GM12878 (cell line): ENCODE measurements at regions of chr5 and their contacts with region 1.

Region 1: DNA sequence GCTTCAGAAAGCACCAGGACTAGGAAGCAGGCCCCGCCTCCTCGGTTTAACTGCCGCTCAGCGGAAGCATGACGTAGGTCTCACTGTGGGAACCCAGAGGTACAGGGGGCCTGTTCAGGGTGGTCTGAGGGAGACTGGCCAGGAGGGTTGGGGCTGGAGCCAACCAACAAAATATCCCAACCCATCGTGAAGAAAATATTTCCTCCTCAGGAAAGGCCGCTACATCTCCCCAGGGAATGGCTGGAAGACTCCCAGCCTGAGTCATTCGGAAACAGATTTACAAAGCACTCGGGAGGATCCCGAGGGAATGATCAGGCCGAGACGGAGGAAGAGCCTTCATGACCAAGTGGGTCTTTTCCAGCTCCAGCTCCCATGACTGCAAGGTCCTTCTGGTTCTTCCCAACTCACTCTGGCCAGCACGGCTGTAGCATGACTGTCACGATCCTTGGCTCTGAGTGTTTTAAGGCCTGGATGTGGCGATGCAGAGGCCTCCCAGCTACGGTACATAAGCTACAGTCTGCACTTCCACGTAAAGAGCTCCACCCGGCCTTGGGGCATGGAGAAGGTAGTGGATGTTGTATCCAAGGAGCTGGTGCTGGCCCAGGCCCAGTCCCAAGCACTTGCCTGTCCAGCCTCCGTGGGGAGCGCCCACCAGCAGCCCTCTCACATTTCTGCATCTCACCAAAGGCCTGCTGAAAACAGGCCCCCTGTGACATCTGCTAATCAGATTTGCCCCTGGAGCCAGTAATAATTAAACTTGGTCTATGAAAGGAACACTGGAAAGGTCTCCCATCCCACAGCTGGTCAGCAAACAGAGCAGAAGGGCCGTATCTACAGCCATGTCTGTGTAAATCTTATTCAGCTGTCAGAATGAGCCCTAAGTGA is 100.6 kb downstream of the LHFPL2 start:
- DNase-seq: no peak
- ATAC-seq: no peak
- H3K4me3 ChIP-seq: no peak overlapping the region
- H3K27ac ChIP-seq: peak overlapping the region; percentile 41; the same call in 1 of the 2 replicates
- H3K4me1 ChIP-seq: peaks cover 59% of the 10 kb centered on the region
- H3K27me3 ChIP-seq: no peaks in the 10 kb centered on the region
- CTCF ChIP-seq: no peak
- EP300 ChIP-seq: no peak
- POLR2A ChIP-seq: 0 out of 2 replicates have a peak, but pooled peaks have one; percentile 2
- RAD21 ChIP-seq: no peak

Region 2: DNA sequence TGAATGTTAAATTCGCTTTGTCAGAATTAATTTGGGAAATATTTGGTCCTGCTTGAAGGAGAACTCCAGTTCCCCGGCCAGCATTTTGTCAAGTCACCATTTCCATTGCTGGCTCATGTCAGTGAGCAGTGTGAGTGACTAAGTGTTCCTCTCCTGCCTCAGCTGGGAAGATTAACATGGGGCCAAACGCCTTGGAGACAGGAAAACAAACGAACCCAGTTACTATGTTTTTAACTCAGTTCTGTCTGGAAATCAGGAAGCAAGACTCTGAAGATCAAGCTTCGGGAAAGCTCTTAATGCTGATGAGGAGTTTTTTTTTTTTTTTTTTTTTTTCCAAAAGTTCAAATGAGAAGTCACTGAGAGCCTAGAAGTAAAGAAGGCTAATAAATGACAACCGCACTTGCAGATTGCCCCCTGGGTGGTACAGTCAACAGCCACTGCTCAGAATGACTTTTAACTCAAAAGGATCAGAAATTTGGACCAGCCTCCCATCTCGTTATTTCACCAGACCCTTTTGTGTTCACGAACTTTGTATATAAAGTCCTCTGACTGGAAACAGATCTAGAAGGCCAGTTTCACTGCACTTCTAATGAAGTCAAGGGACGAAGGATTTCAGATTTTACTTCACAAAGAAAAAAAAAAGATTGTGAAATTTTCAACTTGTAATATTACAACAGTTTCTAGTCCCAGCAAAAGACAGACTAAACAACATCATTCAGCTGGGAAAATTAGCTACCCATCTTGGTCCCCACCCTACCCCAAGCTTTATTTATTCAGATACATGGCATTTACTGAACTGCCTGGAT is 20.7 kb before region 1 on chr5:
- CTCF ChIA-PET with region 1: interaction called, 3 read pairs
- POLR2A ChIA-PET with region 1: interaction called, 5 read pairs
- RAD21 ChIA-PET with region 1: interaction called, 3 read pairs
- SMC1A ChIA-PET with region 1: interaction called, 22 read pairs
- in situ Hi-C with region 1: no loop called
- intact Hi-C with region 1: no loop called
- DNase-seq: no peak
- ATAC-seq: no peak
- H3K4me3 ChIP-seq: no peak overlapping the region
- H3K27ac ChIP-seq: no peak overlapping the region
- H3K4me1 ChIP-seq: peaks cover 16% of the 10 kb centered on the region
- H3K27me3 ChIP-seq: no peaks in the 10 kb centered on the region
- CTCF ChIP-seq: no peak
- EP300 ChIP-seq: no peak
- POLR2A ChIP-seq: no peak
- RAD21 ChIP-seq: no peak

Region 3: DNA sequence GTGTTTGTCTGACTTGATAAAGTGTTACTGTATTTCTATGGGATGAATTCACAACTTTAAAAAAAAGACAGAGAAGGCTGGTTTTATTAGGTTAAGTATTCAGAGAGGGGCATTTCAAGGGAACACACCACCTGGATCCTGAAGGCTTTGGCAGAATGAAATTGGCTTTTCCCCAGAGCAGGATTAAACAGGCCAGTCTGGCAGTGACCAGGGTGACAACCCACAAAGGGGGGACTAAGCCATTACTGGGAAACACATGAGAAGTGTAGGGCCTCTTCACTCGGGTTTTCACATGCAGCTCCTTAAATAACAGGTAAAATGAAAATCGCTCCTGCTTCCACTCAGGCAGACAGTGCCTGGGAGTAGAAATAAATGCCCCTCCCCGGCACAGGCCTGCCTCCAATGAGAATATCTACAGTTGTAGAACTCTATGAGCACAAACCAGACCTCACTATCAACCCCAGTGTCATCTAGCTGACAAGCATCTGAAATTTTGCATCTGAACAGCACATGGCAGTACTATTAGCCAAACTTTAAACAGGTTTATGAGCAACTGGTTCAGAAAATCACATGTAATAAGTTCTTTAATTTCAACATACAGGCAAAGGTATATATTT is 14.8 kb after region 1 on chr5:
- CTCF ChIA-PET with region 1: interaction called, 8 read pairs
- POLR2A ChIA-PET with region 1: interaction called, 4 read pairs
- RAD21 ChIA-PET with region 1: interaction called, 9 read pairs
- SMC1A ChIA-PET with region 1: interaction called, 28 read pairs
- in situ Hi-C with region 1: no loop called
- intact Hi-C with region 1: no loop called
- DNase-seq: no peak
- ATAC-seq: no peak
- H3K4me3 ChIP-seq: no peak overlapping the region
- H3K27ac ChIP-seq: no peak overlapping the region
- H3K4me1 ChIP-seq: peaks cover 4% of the 10 kb centered on the region; the same call in 1 of the 2 replicates
- H3K27me3 ChIP-seq: no peaks in the 10 kb centered on the region
- CTCF ChIP-seq: no peak
- EP300 ChIP-seq: no peak
- POLR2A ChIP-seq: no peak
- RAD21 ChIP-seq: no peak

Region 4: DNA sequence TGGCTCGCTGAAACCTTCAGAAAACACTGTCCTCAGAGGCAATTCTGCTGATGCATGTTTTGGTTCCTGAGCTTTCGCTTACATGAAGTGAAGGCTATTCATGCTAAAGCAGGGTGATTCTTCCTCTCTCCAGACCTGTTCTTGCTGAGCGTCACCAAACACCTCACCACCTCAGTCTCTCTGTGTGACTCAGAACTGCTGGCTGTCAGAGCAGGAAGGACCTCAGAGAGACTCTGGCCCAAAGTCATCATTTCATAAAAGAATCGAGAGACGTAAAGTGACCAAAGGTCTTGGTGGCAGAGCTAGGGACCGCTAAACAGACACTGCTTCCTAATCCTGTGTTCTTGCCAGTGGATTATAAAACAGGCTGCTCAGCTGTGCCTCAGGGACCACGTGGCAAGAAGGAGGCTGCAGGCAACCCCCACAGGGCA is 26.8 kb after region 1 on chr5:
- CTCF ChIA-PET with region 1: interaction called, 5 read pairs
- POLR2A ChIA-PET with region 1: interaction called, 3 read pairs
- RAD21 ChIA-PET with region 1: interaction called, 22 read pairs
- SMC1A ChIA-PET with region 1: interaction called, 37 read pairs
- in situ Hi-C with region 1: no loop called
- intact Hi-C with region 1: no loop called
- DNase-seq: peak; percentile 64
- ATAC-seq: peak; percentile 95
- H3K4me3 ChIP-seq: peak overlapping the region; percentile 1; the same call in 1 of the 2 replicates
- H3K27ac ChIP-seq: peak overlapping the region; percentile 93
- H3K4me1 ChIP-seq: peaks cover 25% of the 10 kb centered on the region
- H3K27me3 ChIP-seq: no peaks in the 10 kb centered on the region
- CTCF ChIP-seq: no peak
- EP300 ChIP-seq: no peak; a peak in 1 of 4 replicates
- POLR2A ChIP-seq: 0 out of 2 replicates have a peak, but pooled peaks have one; percentile 30
- RAD21 ChIP-seq: no peak

Region 5: GRCh38 chr5:78611126-78611605 is 63.2 kb after region 1 on chr5:
- CTCF ChIA-PET with region 1: no interaction called
- POLR2A ChIA-PET with region 1: no interaction called
- RAD21 ChIA-PET with region 1: no interaction called
- SMC1A ChIA-PET with region 1: interaction called, 10 read pairs
- in situ Hi-C with region 1: no loop called
- intact Hi-C with region 1: no loop called
- DNase-seq: no peak
- ATAC-seq: no peak
- H3K4me3 ChIP-seq: no peak overlapping the region
- H3K27ac ChIP-seq: no peak overlapping the region
- H3K4me1 ChIP-seq: no peaks in the 10 kb centered on the region
- H3K27me3 ChIP-seq: no peaks in the 10 kb centered on the region
- CTCF ChIP-seq: no peak
- EP300 ChIP-seq: no peak
- POLR2A ChIP-seq: no peak
- RAD21 ChIP-seq: no peak

Region 6: GRCh38 chr5:78648359-78649210 is 100.6 kb after region 1 on chr5 and contains the start of gene LHFPL2:
- CTCF ChIA-PET with region 1: no interaction called
- POLR2A ChIA-PET with region 1: no interaction called
- RAD21 ChIA-PET with region 1: no interaction called
- SMC1A ChIA-PET with region 1: interaction called, 17 read pairs
- in situ Hi-C with region 1: no loop called
- intact Hi-C with region 1: loop called (anchors 5 kb)
- DNase-seq: no peak
- ATAC-seq: peak; percentile 66
- H3K4me3 ChIP-seq: peak within 1 kb of the TSS; percentile 76
- H3K27ac ChIP-seq: peak within 1 kb of the TSS; percentile 78
- H3K4me1 ChIP-seq: peaks cover 19% of the 10 kb centered on the region
- H3K27me3 ChIP-seq: no peaks in the 10 kb centered on the region
- CTCF ChIP-seq: no peak
- EP300 ChIP-seq: no peak
- POLR2A ChIP-seq: peak; percentile 62
- RAD21 ChIP-seq: 0 out of 2 replicates have a peak, but pooled peaks have one; percentile 14
- polyA plus RNA-seq, gene LHFPL2: 4.1 to 4.5 TPM